GM12878 (cell line): ENCODE measurements at regions of chr1 and their contacts with region 1.

Region 1: DNA sequence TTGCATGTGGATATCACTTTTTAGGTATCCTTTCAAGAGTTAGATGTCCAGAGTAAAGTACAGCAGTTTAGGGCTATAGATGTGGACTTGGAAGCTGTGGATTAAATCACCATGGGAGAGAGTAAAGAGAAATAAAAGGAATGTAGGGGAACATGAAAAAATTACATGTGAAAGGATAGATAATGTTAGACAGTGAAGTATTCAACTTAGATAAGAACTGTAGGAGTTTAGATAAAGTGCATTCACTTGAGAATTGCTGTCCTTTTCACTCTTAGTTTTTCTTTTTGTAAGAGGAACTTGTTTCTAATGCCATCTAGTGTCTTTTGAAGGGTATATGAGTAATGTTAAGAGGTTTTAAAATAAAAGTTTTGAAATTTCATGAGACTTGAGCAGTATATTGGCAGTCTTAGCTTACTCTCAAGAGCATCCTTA is 40.1 kb downstream of the MAST2 start:
- DNase-seq: no peak
- ATAC-seq: peak; percentile 76
- H3K4me3 ChIP-seq: no peak overlapping the region; the same call in 1 of the 2 replicates
- H3K27ac ChIP-seq: peak overlapping the region; percentile 52; the same call in 1 of the 2 replicates
- H3K4me1 ChIP-seq: peaks cover 29% of the 10 kb centered on the region
- H3K27me3 ChIP-seq: no peaks in the 10 kb centered on the region
- CTCF ChIP-seq: peak in 1 of 3 experiments; percentile 35; a peak in 2 of 6 replicates
- EP300 ChIP-seq: no peak
- POLR2A ChIP-seq: no peak
- RAD21 ChIP-seq: peak; percentile 62

Region 2: GRCh38 chr1:45643978-45644377 is 199.5 kb before region 1 on chr1:
- CTCF ChIA-PET with region 1: interaction called, 12 read pairs
- POLR2A ChIA-PET with region 1: no interaction called
- RAD21 ChIA-PET with region 1: no interaction called
- SMC1A ChIA-PET with region 1: no interaction called
- in situ Hi-C with region 1: no loop called
- intact Hi-C with region 1: no loop called
- DNase-seq: no peak
- ATAC-seq: peak; percentile 61
- H3K4me3 ChIP-seq: no peak overlapping the region
- H3K27ac ChIP-seq: no peak overlapping the region
- H3K4me1 ChIP-seq: no peaks in the 10 kb centered on the region
- H3K27me3 ChIP-seq: no peaks in the 10 kb centered on the region
- CTCF ChIP-seq: peak in 2 of 3 experiments; percentile 3 to 22; a peak in 1 of 6 replicates
- EP300 ChIP-seq: no peak
- POLR2A ChIP-seq: no peak
- RAD21 ChIP-seq: 0 out of 2 replicates have a peak, but pooled peaks have one; percentile 11

Region 3: GRCh38 chr1:45750298-45751038 is 93.0 kb before region 1 on chr1 and contains the start of gene IPP:
- CTCF ChIA-PET with region 1: interaction called, 6 read pairs
- POLR2A ChIA-PET with region 1: no interaction called
- RAD21 ChIA-PET with region 1: no interaction called
- SMC1A ChIA-PET with region 1: no interaction called
- in situ Hi-C with region 1: no loop called
- intact Hi-C with region 1: loop called (anchors 5 kb)
- DNase-seq: peak; percentile 90
- ATAC-seq: peak; percentile 98
- H3K4me3 ChIP-seq: peak within 1 kb of the TSS; percentile 91
- H3K27ac ChIP-seq: peak within 1 kb of the TSS; percentile 93
- H3K4me1 ChIP-seq: no peaks in the 10 kb centered on the region; the same call in 1 of the 2 replicates
- H3K27me3 ChIP-seq: no peaks in the 10 kb centered on the region
- CTCF ChIP-seq: peak; percentile 25 to 69 (median 31); a peak in 4 of 6 replicates
- EP300 ChIP-seq: no peak
- POLR2A ChIP-seq: peak; percentile 91
- RAD21 ChIP-seq: peak; percentile 51
- polyA plus RNA-seq, gene IPP: 9.5 to 11.2 TPM